CD4-positive, alpha-beta T cell (primary cell): ENCODE measurements at regions of chr9 and their contacts with region 1.

Region 1: GRCh38 chr9:100098887-100099721 is at the starts of genes ERP44 and INVS:
- DNase-seq: peak; percentile 91 to 99 (median 95)
- ATAC-seq: peak; percentile 99
- H3K4me3 ChIP-seq: peak within 1 kb of the TSS; percentile 78
- H3K4me3 Mint-ChIP-seq: peak within 1 kb of the TSS; percentile 96
- H3K27ac ChIP-seq: peak within 1 kb of the TSS; percentile 58 to 80
- H3K27ac Mint-ChIP-seq: peak within 1 kb of the TSS; percentile 89
- H3K4me1 ChIP-seq: peaks cover 20% of the 10 kb centered on the region
- H3K4me1 Mint-ChIP-seq: peaks cover 50% of the 10 kb centered on the region
- H3K27me3 ChIP-seq: no peaks in the 10 kb centered on the region
- H3K27me3 Mint-ChIP-seq: no peaks in the 10 kb centered on the region
- CTCF ChIP-seq: no peak
- total RNA-seq, gene ERP44: 6.8 to 7.1 TPM
- total RNA-seq, gene INVS: 13.6 to 14.3 TPM

Region 2: GRCh38 chr9:98807070-98807810 is 1291.9 kb before region 1 on chr9 and contains the start of gene GALNT12:
- CTCF ChIA-PET with region 1: no interaction called
- POLR2A ChIA-PET with region 1: no interaction called
- intact Hi-C with region 1: loop called in 1 of 2 experiments (anchors 10 kb)
- DNase-seq: peak in 13 of 14 experiments; percentile 26 to 77 (median 54)
- ATAC-seq: peak; percentile 83
- H3K4me3 ChIP-seq: peak within 1 kb of the TSS; percentile 77
- H3K4me3 Mint-ChIP-seq: peak within 1 kb of the TSS; percentile 94
- H3K27ac ChIP-seq: no peak within 1 kb of the TSS
- H3K27ac Mint-ChIP-seq: peak within 1 kb of the TSS; percentile 39
- H3K4me1 ChIP-seq: peaks cover 20% of the 10 kb centered on the region
- H3K4me1 Mint-ChIP-seq: peaks cover 27% of the 10 kb centered on the region
- H3K27me3 ChIP-seq: peaks cover 4 to 5% of the 10 kb centered on the region in 2 experiments
- H3K27me3 Mint-ChIP-seq: peaks cover 8% of the 10 kb centered on the region
- CTCF ChIP-seq: no peak
- total RNA-seq, gene GALNT12: 8.7 to 11.5 TPM

Region 3: GRCh38 chr9:99513441-99514112 is 585.5 kb before region 1 on chr9:
- CTCF ChIA-PET with region 1: no interaction called
- POLR2A ChIA-PET with region 1: no interaction called
- intact Hi-C with region 1: no loop called
- DNase-seq: peak in 1 of 14 experiments; percentile 5
- ATAC-seq: no peak
- H3K4me3 ChIP-seq: no peak overlapping the region
- H3K4me3 Mint-ChIP-seq: no peak overlapping the region
- H3K27ac ChIP-seq: no peak overlapping the region
- H3K27ac Mint-ChIP-seq: no peak overlapping the region
- H3K4me1 ChIP-seq: no peaks in the 10 kb centered on the region
- H3K4me1 Mint-ChIP-seq: no peaks in the 10 kb centered on the region
- H3K27me3 ChIP-seq: no peaks in the 10 kb centered on the region
- H3K27me3 Mint-ChIP-seq: no peaks in the 10 kb centered on the region
- CTCF ChIP-seq: no peak

Region 4: DNA sequence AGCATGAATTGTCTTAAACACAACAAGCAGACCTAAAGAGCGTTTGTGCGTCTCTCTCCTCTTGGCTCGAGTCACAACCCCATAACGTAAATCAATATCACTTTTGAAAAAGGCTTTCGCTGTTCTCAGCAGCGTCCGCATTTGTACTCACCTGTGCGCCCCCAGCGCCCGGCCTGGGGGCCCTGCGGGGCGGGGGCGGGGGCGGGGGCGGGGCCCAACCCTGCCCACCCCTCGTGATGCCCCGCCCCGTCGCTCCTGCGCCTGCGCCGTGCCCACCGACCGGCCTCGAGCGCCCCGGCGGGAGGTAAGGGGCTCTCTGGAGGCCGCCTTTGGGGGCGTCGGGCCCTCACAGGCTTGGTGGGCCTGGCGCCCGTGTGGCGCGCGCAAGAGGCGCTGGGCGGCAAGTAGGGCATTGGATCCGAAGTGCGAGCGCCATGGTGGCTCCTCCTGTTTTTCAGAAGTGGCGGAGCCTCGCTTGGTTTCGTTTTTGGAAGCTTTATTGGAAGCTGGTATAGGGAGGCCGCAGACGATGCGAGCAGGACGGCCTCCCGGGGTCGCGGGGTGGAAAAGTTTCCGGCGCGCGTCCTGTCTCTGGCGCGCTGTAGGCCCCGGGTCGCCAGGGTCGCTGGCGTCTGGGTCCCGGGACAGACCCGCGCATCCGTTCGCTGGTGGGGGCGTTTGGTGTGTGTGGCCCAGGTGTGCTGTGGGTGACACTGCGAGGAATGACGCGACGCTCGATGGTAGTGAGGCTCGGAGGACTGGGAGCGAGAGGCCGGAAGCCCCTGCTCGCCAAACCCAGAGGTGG is 192.5 kb before region 1 on chr9 and contains the start of gene STX17:
- CTCF ChIA-PET with region 1: no interaction called
- POLR2A ChIA-PET with region 1: interaction called, 6 read pairs
- intact Hi-C with region 1: loop called (anchors 5 kb)
- DNase-seq: peak; percentile 69 to 92 (median 79)
- ATAC-seq: peak; percentile 89
- H3K4me3 ChIP-seq: peak within 1 kb of the TSS; percentile 91
- H3K4me3 Mint-ChIP-seq: peak within 1 kb of the TSS; percentile 100
- H3K27ac ChIP-seq: peak within 1 kb of the TSS; percentile 98
- H3K27ac Mint-ChIP-seq: peak within 1 kb of the TSS; percentile 100
- H3K4me1 ChIP-seq: peaks cover 11% of the 10 kb centered on the region
- H3K4me1 Mint-ChIP-seq: peaks cover 46% of the 10 kb centered on the region
- H3K27me3 ChIP-seq: no peaks in the 10 kb centered on the region
- H3K27me3 Mint-ChIP-seq: no peaks in the 10 kb centered on the region
- CTCF ChIP-seq: no peak
- total RNA-seq, gene STX17: 29.3 to 31.3 TPM

Region 5: DNA sequence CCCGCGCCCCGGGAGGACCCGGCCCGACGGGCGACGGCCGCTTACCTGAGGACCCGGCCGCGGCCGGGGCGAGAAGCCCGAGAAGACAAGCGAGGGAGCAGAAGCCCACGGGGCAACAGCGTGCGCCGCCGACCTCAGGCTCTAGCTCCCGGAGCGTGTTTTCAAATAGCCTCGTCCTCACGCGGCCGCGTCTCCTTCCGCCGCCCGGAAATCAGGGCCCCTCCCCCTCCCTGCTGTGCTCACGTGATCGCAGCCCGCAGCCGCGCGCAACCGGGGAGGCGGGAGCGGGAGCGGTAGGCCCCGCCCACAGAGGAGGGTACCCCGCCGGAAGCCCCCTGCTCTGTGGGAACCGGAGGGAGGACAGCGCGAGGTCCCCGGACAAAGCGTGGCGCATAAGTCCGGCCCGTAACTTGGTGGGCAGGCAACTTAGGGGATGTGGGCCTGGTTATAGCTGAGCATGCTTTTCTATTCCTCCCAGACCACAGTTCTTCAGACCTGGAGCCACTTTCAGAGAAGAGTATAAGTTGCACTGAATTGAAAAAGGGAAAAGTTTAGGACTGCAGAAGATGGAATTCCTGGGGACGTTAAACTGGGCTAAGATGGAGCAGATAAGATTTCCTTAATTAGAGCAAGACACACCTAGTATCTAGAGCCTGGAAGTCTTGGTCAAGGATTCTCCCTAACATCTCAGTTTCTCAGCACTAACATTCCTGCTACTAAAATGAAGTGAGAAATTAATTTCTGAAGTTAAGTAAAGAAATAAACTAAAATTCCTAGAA is 253.8 kb after region 1 on chr9 and contains the start of gene TEX10:
- CTCF ChIA-PET with region 1: no interaction called
- POLR2A ChIA-PET with region 1: no interaction called
- intact Hi-C with region 1: loop called in 1 of 2 experiments (anchors 2 kb)
- DNase-seq: peak; percentile 79 to 93 (median 85)
- ATAC-seq: peak; percentile 90
- H3K4me3 ChIP-seq: peak within 1 kb of the TSS; percentile 85
- H3K4me3 Mint-ChIP-seq: peak within 1 kb of the TSS; percentile 89
- H3K27ac ChIP-seq: peak within 1 kb of the TSS; percentile 58 to 60
- H3K27ac Mint-ChIP-seq: peak within 1 kb of the TSS; percentile 60
- H3K4me1 ChIP-seq: peaks cover 21% of the 10 kb centered on the region
- H3K4me1 Mint-ChIP-seq: peaks cover 53% of the 10 kb centered on the region
- H3K27me3 ChIP-seq: no peaks in the 10 kb centered on the region
- H3K27me3 Mint-ChIP-seq: no peaks in the 10 kb centered on the region
- CTCF ChIP-seq: no peak
- total RNA-seq, gene TEX10: 9.3 to 10.1 TPM

Region 6: GRCh38 chr9:101398068-101398929 is 1299.2 kb after region 1 on chr9 and contains the starts of genes MRPL50 and ZNF189:
- CTCF ChIA-PET with region 1: no interaction called
- POLR2A ChIA-PET with region 1: no interaction called
- intact Hi-C with region 1: loop called in 1 of 2 experiments (anchors 10 kb)
- DNase-seq: peak; percentile 90 to 99 (median 94)
- ATAC-seq: peak; percentile 94
- H3K4me3 ChIP-seq: peak within 1 kb of the TSS; percentile 81
- H3K4me3 Mint-ChIP-seq: peak within 1 kb of the TSS; percentile 99
- H3K27ac ChIP-seq: peak within 1 kb of the TSS; percentile 87 to 92
- H3K27ac Mint-ChIP-seq: peak within 1 kb of the TSS; percentile 99
- H3K4me1 ChIP-seq: peaks cover 32% of the 10 kb centered on the region
- H3K4me1 Mint-ChIP-seq: peaks cover 86% of the 10 kb centered on the region
- H3K27me3 ChIP-seq: no peaks in the 10 kb centered on the region
- H3K27me3 Mint-ChIP-seq: no peaks in the 10 kb centered on the region
- CTCF ChIP-seq: no peak
- total RNA-seq, gene MRPL50: 5.9 to 6.1 TPM
- total RNA-seq, gene ZNF189: 5.0 to 5.3 TPM